Colonic mucosa (tissue), 4 donors: ENCODE measurements at regions of chr10 and their contacts with region 1.

Region 1: GRCh38 chr10:62816331-62817120 is at the start of gene EGR2:
- DNase-seq: peak; percentile 95
- H3K4me3 ChIP-seq: peak within 1 kb of the TSS; percentile 81
- H3K27ac ChIP-seq: peak within 1 kb of the TSS; percentile 83
- H3K4me1 ChIP-seq: peaks cover 16% of the 10 kb centered on the region
- H3K27me3 ChIP-seq: peaks cover 36% of the 10 kb centered on the region
- CTCF ChIP-seq: no peak
- total RNA-seq, gene EGR2: 0.20 to 8.2 TPM

Region 2: GRCh38 chr10:62456611-62457101 is 359.9 kb before region 1 on chr10:
- intact Hi-C with region 1: loop called (anchors 10 kb)
- DNase-seq: no peak
- H3K4me3 ChIP-seq: no peak overlapping the region
- H3K27ac ChIP-seq: no peak overlapping the region
- H3K4me1 ChIP-seq: no peaks in the 10 kb centered on the region
- H3K27me3 ChIP-seq: no peaks in the 10 kb centered on the region
- CTCF ChIP-seq: no peak

Region 3: GRCh38 chr10:62594093-62594520 is 222.4 kb before region 1 on chr10:
- intact Hi-C with region 1: loop called (anchors 2 kb)
- DNase-seq: peak; percentile 63
- H3K4me3 ChIP-seq: no peak overlapping the region
- H3K27ac ChIP-seq: no peak overlapping the region
- H3K4me1 ChIP-seq: no peaks in the 10 kb centered on the region
- H3K27me3 ChIP-seq: no peaks in the 10 kb centered on the region
- CTCF ChIP-seq: peak; percentile 87

Region 4: GRCh38 chr10:63157845-63158624 is 341.5 kb after region 1 on chr10:
- intact Hi-C with region 1: loop called (anchors 5 kb)
- DNase-seq: peak; percentile 39
- H3K4me3 ChIP-seq: no peak overlapping the region
- H3K27ac ChIP-seq: no peak overlapping the region
- H3K4me1 ChIP-seq: peaks cover 5% of the 10 kb centered on the region
- H3K27me3 ChIP-seq: no peaks in the 10 kb centered on the region
- CTCF ChIP-seq: peak; percentile 79

Region 5: DNA sequence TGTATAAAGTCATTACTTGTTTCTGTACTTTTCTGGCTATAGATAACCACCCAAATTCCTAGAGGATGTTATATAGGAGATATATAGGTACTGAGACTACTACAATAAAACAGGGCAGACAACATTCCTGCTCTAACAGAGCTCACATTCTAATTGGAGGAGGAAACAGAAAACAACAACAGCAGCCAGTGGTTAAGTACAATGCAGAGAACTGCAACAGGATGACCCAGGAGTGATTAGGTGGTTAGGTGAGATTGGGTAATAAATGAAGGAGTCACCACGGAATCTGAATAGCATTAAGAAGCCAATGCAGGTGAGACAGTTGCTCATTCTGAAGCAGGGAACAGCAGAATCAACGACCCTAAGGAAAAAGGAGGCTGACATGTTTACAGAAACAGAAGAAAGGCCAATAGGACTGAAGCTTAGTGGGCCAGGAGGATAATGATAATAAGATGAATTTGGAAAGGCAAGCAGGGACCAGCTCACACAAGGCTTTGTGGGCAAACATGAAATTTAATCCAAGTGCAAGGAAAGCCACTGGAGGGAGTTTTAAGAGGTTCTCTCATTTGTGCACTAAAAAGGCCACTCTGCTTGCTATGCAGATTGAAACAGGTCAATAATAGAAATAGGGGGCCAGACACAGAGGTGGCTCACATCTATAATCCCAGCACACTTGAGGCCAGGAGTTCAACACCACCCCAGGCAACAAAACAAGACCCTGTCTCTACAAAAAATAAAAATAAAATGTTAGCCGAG is 687.8 kb after region 1 on chr10:
- intact Hi-C with region 1: no loop called
- DNase-seq: no peak
- H3K4me3 ChIP-seq: no peak overlapping the region
- H3K27ac ChIP-seq: no peak overlapping the region
- H3K4me1 ChIP-seq: no peaks in the 10 kb centered on the region
- H3K27me3 ChIP-seq: no peaks in the 10 kb centered on the region
- CTCF ChIP-seq: no peak